Activated CD8-positive, alpha-beta T cell treated with anti-CD3 and anti-CD28 coated beads for 36 hours (primary cell): ENCODE measurements at regions of chr10 and their contacts with region 1.

Region 1: GRCh38 chr10:14889318-14889717 is 10.7 kb downstream of the SUV39H2 start:
- DNase-seq: no peak
- ATAC-seq: peak; percentile 61
- H3K4me3 Mint-ChIP-seq: no peak overlapping the region
- H3K27ac Mint-ChIP-seq: no peak overlapping the region
- H3K4me1 Mint-ChIP-seq: peaks cover 7% of the 10 kb centered on the region
- H3K27me3 Mint-ChIP-seq: no peaks in the 10 kb centered on the region
- CTCF ChIP-seq: peak; percentile 56

Region 2: DNA sequence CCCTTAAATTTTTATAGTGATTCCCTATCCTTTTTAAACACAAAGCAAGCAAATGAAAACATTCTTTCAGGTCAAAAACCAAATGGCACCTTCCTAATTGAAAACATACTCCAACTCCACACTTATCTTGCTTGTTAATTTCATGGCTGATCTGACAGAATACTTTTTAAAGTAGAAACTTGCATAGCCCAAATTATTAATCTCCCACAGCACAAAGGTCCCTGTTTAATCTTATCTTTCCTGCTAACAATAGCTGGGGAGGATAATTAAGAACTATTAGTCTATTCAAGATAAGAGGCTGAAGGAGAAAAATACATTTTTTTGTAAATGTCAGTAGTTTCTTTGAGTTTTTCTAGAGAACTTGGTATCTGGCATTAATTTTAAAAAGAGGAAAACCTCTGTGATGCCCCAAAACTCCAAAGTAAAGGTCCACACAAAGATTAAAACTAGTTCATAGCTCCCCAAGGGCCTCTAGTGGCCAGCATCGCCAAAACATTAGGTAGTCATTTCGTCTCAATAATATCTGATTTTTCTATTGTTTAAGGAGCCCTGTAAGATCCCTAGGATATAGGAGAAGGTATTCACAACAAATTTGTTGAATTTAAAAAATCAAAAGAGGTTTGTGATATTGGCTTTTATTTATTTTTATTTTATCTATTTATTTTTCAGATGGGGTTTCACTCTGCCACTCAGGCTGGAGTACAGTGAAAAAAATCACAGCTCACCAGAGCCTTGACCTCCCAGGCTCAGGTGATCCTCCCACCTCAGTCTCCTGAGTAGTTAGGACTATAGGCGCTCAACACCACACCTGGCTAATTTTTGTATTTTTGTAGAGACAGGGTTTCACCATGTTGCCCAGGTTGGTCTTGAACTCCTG is 66.2 kb before region 1 on chr10:
- CTCF ChIA-PET with region 1: no interaction called
- POLR2A ChIA-PET with region 1: no interaction called
- intact Hi-C with region 1: no loop called
- DNase-seq: peak; percentile 69
- ATAC-seq: peak; percentile 68
- H3K4me3 Mint-ChIP-seq: no peak overlapping the region
- H3K27ac Mint-ChIP-seq: no peak overlapping the region
- H3K4me1 Mint-ChIP-seq: peaks cover 3% of the 10 kb centered on the region
- H3K27me3 Mint-ChIP-seq: no peaks in the 10 kb centered on the region
- CTCF ChIP-seq: peak; percentile 83

Region 3: DNA sequence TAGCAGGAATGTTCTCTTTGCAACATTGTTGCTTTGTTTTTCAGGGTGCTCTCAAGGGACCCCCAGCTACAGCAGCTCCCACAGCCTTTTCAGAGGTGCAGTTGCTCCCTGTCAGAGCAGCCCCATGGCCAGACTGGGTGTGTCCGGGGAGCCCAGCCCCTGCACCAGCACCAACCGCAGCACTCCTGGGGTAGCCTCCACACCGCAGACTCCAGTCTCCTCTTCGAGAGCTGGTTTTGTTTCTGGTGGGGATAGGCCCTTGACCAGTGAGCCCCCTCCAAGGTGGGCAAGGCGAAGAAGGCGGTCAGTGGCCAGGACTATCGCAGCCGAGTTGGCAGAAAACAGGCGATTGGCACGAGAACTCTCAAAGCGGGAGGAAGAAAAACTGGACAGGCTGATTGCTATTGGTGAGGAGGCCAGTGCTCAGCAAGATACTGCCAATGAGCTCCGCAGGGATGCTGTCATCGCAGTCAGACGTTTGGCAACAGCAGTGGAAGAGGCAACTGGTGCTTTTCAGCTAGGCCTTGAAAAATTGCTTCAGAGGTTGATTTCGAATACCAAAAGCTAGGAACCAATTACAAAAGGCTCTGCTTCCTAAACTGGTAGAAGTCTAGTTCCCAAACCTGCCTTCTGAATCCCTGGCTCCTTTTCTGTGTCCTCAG is 45.9 kb before region 1 on chr10:
- CTCF ChIA-PET with region 1: no interaction called
- POLR2A ChIA-PET with region 1: no interaction called
- intact Hi-C with region 1: no loop called
- DNase-seq: no peak
- ATAC-seq: no peak
- H3K4me3 Mint-ChIP-seq: no peak overlapping the region
- H3K27ac Mint-ChIP-seq: no peak overlapping the region
- H3K4me1 Mint-ChIP-seq: peaks cover 27% of the 10 kb centered on the region
- H3K27me3 Mint-ChIP-seq: no peaks in the 10 kb centered on the region
- CTCF ChIP-seq: no peak

Region 4: DNA sequence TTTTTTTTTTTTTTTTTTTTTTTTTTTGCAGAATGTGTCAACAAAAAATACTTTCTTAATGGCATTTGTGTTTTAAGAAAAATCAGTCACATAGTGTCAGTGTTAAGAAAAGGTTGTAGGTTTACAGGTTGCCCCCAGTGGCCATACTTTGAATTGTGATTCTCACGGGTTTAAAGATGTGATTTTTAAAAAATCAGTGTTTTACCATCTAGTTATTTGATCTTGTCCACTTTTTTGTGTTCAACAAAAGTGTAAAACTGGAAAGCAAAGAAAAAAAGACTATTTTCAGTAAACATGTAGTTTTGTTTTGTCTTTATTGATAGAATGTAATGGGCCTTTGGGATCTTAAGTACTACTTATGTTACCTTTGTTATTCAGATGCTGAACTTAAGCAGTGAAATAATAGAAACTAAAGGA is 15.0 kb after region 1 on chr10:
- CTCF ChIA-PET with region 1: interaction called, 36 read pairs
- POLR2A ChIA-PET with region 1: interaction called, 3 read pairs
- intact Hi-C with region 1: no loop called
- DNase-seq: peak; percentile 43
- ATAC-seq: peak; percentile 61
- H3K4me3 Mint-ChIP-seq: no peak overlapping the region
- H3K27ac Mint-ChIP-seq: no peak overlapping the region
- H3K4me1 Mint-ChIP-seq: peaks cover 5% of the 10 kb centered on the region
- H3K27me3 Mint-ChIP-seq: no peaks in the 10 kb centered on the region
- CTCF ChIP-seq: peak; percentile 65